ENCODE measurements at regions of chr2 and their contacts with region 1.

Region 1: DNA sequence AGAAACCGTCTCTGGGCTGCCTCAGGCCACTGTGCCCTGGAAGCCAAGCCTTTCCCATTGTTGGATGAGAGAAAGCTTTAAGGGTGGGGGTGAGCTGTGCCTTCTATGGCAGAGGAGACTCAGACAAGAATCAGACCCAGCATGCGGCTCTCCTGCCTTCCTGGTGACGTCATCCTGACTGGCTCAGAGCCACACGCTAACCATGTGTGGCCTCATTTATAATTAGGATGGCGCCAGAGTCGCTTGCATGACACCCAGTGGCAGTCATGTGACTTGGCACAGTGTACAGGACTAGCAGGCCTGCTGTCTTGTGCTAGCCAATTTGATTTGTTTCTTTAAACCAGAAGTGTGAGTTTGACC is 99.2 kb downstream of the SH3BP4 start:
- DNase-seq: peak; percentile 62 to 77
- ATAC-seq: peak; percentile 71 to 77
- H3K4me3 ChIP-seq: no peak overlapping the region
- H3K27ac ChIP-seq: peak overlapping the region; percentile 43 to 67 (median 62)
- H3K4me1 ChIP-seq: peaks cover 11 to 28% of the 10 kb centered on the region in 2 donors
- H3K27me3 ChIP-seq: no peaks in the 10 kb centered on the region
- CTCF ChIP-seq: no peak
- POLR2A ChIP-seq: peak in 1 of 2 donors; percentile 7

Region 2: DNA sequence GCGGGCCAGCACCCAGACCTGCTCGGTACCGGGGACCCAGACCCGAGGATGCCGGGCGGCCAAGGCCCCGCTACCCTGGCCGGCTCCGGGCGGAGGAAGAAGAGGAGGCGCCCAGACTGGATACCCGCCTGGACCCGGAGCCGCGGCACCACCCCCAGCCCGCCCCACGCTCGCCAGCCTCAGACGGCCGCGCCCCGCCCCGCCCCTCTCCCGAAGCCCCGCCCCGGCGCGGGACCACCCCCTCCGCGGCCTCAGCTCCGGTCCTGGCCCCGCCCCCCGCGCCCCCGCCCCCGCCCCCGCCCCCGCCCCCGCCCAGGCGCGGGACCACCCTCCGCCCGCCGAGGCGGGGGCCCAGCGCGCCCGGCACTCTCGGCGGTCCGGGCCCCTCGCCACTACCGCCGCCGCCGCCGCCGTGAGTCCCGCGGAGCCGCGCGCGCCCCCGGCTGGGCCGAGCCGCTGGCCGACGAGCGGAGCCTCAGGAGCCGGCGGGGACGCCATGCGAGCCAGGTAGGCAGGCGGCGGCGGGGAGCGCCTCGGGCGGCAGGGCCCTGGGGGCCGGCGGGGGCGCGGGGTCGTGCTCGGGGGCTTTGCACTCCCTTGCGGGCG is 99.2 kb before region 1 on chr2 and contains the start of gene SH3BP4:
- in situ Hi-C with region 1: no loop called
- intact Hi-C with region 1: loop called (anchors 5 kb)
- DNase-seq: peak; percentile 55 to 61
- ATAC-seq: peak; percentile 53 to 62
- H3K4me3 ChIP-seq: peak within 1 kb of the TSS; percentile 62 to 91 (median 76)
- H3K27ac ChIP-seq: peak within 1 kb of the TSS; percentile 69 to 81 (median 77)
- H3K4me1 ChIP-seq: peaks cover 5 to 15% of the 10 kb centered on the region in 2 donors
- H3K27me3 ChIP-seq: peaks cover 0 to 12% (median 0%) of the 10 kb centered on the region in 3 donors
- CTCF ChIP-seq: no peak
- POLR2A ChIP-seq: peak; percentile 42 to 51
- total RNA-seq, gene SH3BP4: 10.2 to 36.9 (median 15.9) TPM

Region 3: GRCh38 chr2:235021752-235022151 is 29.2 kb before region 1 on chr2:
- in situ Hi-C with region 1: no loop called
- intact Hi-C with region 1: no loop called
- DNase-seq: no peak
- ATAC-seq: no peak
- H3K4me3 ChIP-seq: no peak overlapping the region
- H3K27ac ChIP-seq: no peak overlapping the region
- H3K4me1 ChIP-seq: peaks cover 3 to 8% of the 10 kb centered on the region in 2 donors
- H3K27me3 ChIP-seq: peaks cover 0 to 1% (median 0%) of the 10 kb centered on the region in 3 donors
- CTCF ChIP-seq: no peak
- POLR2A ChIP-seq: no peak

Measured in gastrocnemius medialis (tissue), 4 donors.